ENCODE measurements at regions of chr6 and their contacts with region 1.

Region 1: GRCh38 chr6:130282234-130282995 is 59.7 kb upstream of the SAMD3 start:
- DNase-seq: peak in 4 of 5 donors; percentile 38 to 49 (median 47)
- H3K4me3 ChIP-seq: no peak overlapping the region
- H3K4me3 Mint-ChIP-seq: no peak overlapping the region
- H3K27ac ChIP-seq: no peak overlapping the region
- H3K27ac Mint-ChIP-seq: peak overlapping the region in 4 of 7 donors; percentile 5 to 84 (median 25)
- H3K4me1 ChIP-seq: no peaks in the 10 kb centered on the region
- H3K4me1 Mint-ChIP-seq: peaks cover 6 to 17% (median 10%) of the 10 kb centered on the region in 4 donors
- H3K27me3 ChIP-seq: no peaks in the 10 kb centered on the region
- H3K27me3 Mint-ChIP-seq: no peaks in the 10 kb centered on the region

Region 2: DNA sequence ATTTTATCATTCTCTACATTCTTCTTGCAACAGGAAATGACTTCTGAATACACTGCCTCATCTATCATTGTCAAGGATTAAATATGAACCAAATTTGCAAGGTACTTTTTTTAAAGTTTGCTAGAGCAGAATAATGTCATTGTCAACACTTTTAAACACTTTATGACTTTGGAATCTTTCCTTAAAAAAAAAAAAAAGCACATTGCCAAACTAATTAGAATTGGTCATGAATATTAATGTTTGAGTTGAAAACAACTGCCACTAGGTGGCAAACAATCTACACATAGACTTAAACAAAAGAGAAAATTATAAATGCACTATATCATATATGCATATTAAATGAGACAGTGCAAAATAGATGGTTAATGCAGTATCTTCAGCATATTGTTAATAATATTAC is 388.8 kb before region 1 on chr6:
- CTCF ChIA-PET with region 1: no interaction called
- POLR2A ChIA-PET with region 1: no interaction called
- intact Hi-C with region 1: loop called (anchors 10 kb)
- DNase-seq: peak in 3 of 5 donors; percentile 19 to 30 (median 20)
- H3K4me3 ChIP-seq: no peak overlapping the region
- H3K4me3 Mint-ChIP-seq: no peak overlapping the region
- H3K27ac ChIP-seq: no peak overlapping the region
- H3K27ac Mint-ChIP-seq: no peak overlapping the region
- H3K4me1 ChIP-seq: no peaks in the 10 kb centered on the region
- H3K4me1 Mint-ChIP-seq: peaks cover 0 to 6% (median 4%) of the 10 kb centered on the region in 4 donors
- H3K27me3 ChIP-seq: no peaks in the 10 kb centered on the region
- H3K27me3 Mint-ChIP-seq: peaks cover 0 to 2% of the 10 kb centered on the region in 2 donors

Region 3: DNA sequence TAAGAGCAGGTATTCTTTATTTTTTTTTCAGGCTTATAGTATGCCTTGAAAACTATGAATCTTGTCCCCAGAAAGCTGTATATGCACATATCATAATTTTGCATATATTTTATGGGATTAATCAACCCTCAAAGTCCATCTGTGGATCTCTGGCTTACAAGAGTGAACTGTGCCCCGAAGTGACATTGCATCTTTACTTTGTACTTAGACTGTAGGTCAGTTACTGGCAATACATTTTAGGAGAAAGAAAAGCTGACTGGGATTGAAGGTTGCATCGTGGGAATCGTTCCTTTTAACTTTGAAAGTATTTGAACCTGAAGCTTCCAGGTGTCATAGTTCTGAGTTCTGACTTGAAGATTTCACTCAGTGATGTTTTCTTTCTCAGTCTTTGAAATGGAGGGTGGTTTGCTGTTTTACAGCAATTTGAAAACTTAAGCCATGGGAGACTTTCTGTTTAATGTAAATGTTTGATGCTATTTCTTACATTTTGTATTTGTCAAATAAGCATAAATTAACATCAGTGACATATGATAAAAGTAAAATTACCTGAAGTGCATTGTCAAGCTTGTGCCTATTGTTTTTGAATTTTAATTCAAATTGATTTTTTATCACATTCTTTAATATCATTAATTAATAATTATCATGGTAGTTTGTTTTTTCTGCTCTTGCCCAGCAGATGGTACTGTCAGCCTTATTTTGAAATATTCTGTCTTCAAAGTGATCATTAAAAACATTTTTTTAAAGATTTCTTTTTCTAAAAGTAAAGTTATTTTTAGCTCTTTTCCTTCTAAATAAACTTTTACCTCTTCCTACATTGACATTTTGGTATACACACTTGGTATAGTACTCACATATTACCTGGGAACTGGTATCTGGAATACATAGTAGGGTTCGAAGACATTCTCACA is 235.1 kb before region 1 on chr6:
- CTCF ChIA-PET with region 1: interaction called, 11 read pairs
- POLR2A ChIA-PET with region 1: no interaction called
- intact Hi-C with region 1: loop called (anchors 1 kb)
- DNase-seq: no peak
- H3K4me3 ChIP-seq: no peak overlapping the region
- H3K4me3 Mint-ChIP-seq: no peak overlapping the region
- H3K27ac ChIP-seq: no peak overlapping the region
- H3K27ac Mint-ChIP-seq: peak overlapping the region in 1 of 7 donors; percentile 3
- H3K4me1 ChIP-seq: no peaks in the 10 kb centered on the region
- H3K4me1 Mint-ChIP-seq: peaks cover 0 to 14% (median 11%) of the 10 kb centered on the region in 4 donors
- H3K27me3 ChIP-seq: no peaks in the 10 kb centered on the region
- H3K27me3 Mint-ChIP-seq: no peaks in the 10 kb centered on the region

Region 4: DNA sequence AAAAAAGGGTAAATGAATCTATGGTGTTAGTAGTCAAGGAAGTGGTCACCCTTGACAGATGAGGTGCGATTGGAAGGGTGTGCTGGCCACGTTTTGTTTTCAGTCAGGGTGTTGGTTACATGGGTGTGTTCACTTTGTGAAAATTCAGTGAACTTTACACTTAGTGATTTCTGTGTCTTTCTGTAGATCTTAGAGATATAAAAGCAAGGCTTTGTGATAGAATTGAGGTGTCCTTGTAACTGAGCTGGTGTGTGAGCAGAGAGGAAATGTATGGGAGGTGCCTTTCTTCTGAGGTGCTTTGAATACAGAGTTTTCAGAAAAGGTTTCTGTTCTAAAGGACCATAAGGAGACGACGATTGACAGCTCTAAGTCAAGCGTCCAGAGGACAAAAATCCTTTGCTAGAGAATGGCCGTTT is 150.1 kb before region 1 on chr6:
- CTCF ChIA-PET with region 1: interaction called, 33 read pairs
- POLR2A ChIA-PET with region 1: interaction called, 8 read pairs
- intact Hi-C with region 1: loop called (anchors 1 kb)
- DNase-seq: peak; percentile 74 to 91 (median 86)
- H3K4me3 ChIP-seq: peak overlapping the region in 1 of 2 donors; percentile 21
- H3K4me3 Mint-ChIP-seq: peak overlapping the region; percentile 53 to 87 (median 74)
- H3K27ac ChIP-seq: peak overlapping the region; percentile 50
- H3K27ac Mint-ChIP-seq: peak overlapping the region; percentile 82 to 97 (median 96)
- H3K4me1 ChIP-seq: peaks cover 72% of the 10 kb centered on the region
- H3K4me1 Mint-ChIP-seq: peaks cover 66 to 93% (median 73%) of the 10 kb centered on the region in 4 donors
- H3K27me3 ChIP-seq: no peaks in the 10 kb centered on the region
- H3K27me3 Mint-ChIP-seq: no peaks in the 10 kb centered on the region

Region 5: DNA sequence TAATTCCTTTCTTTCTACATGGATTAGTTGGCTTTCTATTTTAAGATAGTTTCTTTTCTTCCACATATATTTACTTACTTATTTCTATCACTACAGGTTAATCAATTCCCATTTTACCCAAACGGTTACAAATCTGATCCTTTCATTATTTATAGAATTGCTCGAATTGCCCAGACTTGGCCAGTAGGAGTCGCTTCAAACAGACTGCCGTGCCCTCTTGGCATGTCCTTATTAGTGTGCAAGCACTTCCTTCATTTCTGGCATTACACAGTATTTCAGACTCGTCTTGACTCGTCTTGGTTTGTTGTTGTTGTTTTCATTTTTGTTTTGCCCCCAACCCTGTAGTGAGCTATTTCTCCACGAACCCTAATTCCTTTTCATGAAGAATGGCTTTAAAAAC is 134.2 kb before region 1 on chr6:
- CTCF ChIA-PET with region 1: interaction called, 26 read pairs
- POLR2A ChIA-PET with region 1: no interaction called
- intact Hi-C with region 1: loop called (anchors 1 kb)
- DNase-seq: peak in 1 of 5 donors; percentile 16
- H3K4me3 ChIP-seq: no peak overlapping the region
- H3K4me3 Mint-ChIP-seq: peak overlapping the region in 1 of 8 donors; percentile 0
- H3K27ac ChIP-seq: no peak overlapping the region
- H3K27ac Mint-ChIP-seq: peak overlapping the region in 6 of 7 donors; percentile 24 to 83 (median 70)
- H3K4me1 ChIP-seq: no peaks in the 10 kb centered on the region
- H3K4me1 Mint-ChIP-seq: peaks cover 7 to 22% (median 9%) of the 10 kb centered on the region in 4 donors
- H3K27me3 ChIP-seq: no peaks in the 10 kb centered on the region
- H3K27me3 Mint-ChIP-seq: no peaks in the 10 kb centered on the region

Region 6: DNA sequence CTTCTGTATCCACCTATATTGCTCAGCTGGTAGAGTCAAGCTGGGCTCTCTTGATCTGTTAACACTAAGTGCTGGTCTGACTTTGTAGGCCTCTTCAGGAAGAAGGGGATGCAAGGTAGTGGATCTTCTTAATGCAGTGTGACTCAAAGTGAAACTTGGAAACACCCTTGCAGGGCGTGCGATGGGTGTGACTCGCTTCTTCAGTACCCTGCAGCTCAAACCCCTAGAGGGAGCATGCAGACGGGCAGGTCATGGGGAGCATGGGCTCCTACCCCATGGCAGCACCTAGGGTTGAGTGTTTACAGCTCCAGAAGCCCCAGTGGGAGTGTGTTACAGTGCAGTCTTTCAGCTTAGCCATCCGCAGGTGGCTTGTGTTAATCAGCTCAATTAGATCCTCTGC is 58.9 kb before region 1 on chr6:
- CTCF ChIA-PET with region 1: interaction called, 31 read pairs
- POLR2A ChIA-PET with region 1: interaction called, 4 read pairs
- intact Hi-C with region 1: loop called (anchors 1 kb)
- DNase-seq: peak; percentile 60 to 78 (median 63)
- H3K4me3 ChIP-seq: no peak overlapping the region
- H3K4me3 Mint-ChIP-seq: peak overlapping the region; percentile 62 to 93 (median 89)
- H3K27ac ChIP-seq: peak overlapping the region; percentile 47
- H3K27ac Mint-ChIP-seq: peak overlapping the region; percentile 83 to 96 (median 92)
- H3K4me1 ChIP-seq: peaks cover 39% of the 10 kb centered on the region
- H3K4me1 Mint-ChIP-seq: peaks cover 27 to 52% (median 40%) of the 10 kb centered on the region in 4 donors
- H3K27me3 ChIP-seq: no peaks in the 10 kb centered on the region
- H3K27me3 Mint-ChIP-seq: no peaks in the 10 kb centered on the region